ENCODE measurements at regions of chr11 and their contacts with region 1.

Region 1: GRCh38 chr11:58061813-58062212 is 31.1 kb downstream of the OR6Q1 start:
- DNase-seq: no peak
- ATAC-seq: no peak
- H3K4me3 ChIP-seq: no peak overlapping the region
- H3K27ac ChIP-seq: no peak overlapping the region
- H3K4me1 ChIP-seq: peaks cover 0 to 23% (median 13%) of the 10 kb centered on the region in 9 donors
- H3K27me3 ChIP-seq: no peaks in the 10 kb centered on the region
- CTCF ChIP-seq: no peak

Region 2: DNA sequence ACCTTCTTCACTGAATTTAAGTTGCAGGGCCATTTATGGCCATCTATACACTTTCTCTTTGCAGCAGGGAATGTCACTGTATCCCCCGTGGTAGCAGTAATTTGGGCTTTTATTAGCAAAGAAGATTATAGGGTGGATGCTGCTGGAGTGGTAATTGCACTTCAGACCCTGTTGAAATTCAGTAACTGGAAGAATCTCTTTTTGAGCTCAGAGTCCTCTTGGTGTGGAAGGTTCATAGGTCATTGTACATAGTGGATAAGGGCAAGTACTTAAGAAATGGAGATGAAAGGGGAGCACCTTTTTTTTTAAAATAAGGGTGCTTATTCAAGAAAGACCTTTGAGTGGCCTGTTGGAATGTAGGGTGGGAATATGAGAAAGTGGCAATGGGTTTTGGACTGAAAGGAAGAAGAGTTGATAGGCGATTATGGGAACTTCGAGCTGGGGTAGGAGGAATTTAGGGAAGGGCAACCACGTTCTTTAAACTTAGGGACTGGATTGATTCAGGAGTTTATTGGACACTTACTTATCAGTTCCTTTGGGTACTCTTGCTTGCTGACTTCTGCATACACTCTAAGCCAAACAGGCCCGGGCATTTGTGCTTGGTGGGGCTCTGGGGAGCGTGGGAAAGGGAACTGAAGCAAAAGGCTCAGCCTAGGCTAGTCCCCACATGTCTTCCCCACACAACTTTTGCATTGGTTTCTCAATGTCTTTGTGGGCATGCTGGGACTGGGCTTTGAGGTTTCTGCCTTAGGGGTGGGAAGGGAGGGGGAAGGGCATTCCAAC is 273.7 kb before region 1 on chr11:
- intact Hi-C with region 1: no loop called
- DNase-seq: no peak
- ATAC-seq: peak in 4 of 8 donors; percentile 9 to 31 (median 24)
- H3K4me3 ChIP-seq: no peak overlapping the region
- H3K27ac ChIP-seq: peak overlapping the region in 6 of 10 donors; percentile 0 to 62 (median 33)
- H3K4me1 ChIP-seq: peaks cover 16 to 98% (median 87%) of the 10 kb centered on the region in 9 donors
- H3K27me3 ChIP-seq: no peaks in the 10 kb centered on the region
- CTCF ChIP-seq: no peak

Region 3: GRCh38 chr11:58127342-58127741 is 65.5 kb after region 1 on chr11:
- intact Hi-C with region 1: loop called in 1 of 10 experiments (anchors 10 kb)
- DNase-seq: no peak
- ATAC-seq: no peak
- H3K4me3 ChIP-seq: no peak overlapping the region
- H3K27ac ChIP-seq: no peak overlapping the region
- H3K4me1 ChIP-seq: no peaks in the 10 kb centered on the region
- H3K27me3 ChIP-seq: no peaks in the 10 kb centered on the region
- CTCF ChIP-seq: no peak

Measured in heart right ventricle (tissue), 16 donors.